ENCODE measurements at regions of chr1 and their contacts with region 1.

Region 1: GRCh38 chr1:24415334-24415909 is at the start of gene NIPAL3:
- DNase-seq: peak; percentile 99
- ATAC-seq: peak; percentile 94
- H3K4me3 Mint-ChIP-seq: peak within 1 kb of the TSS; percentile 98
- H3K27ac Mint-ChIP-seq: peak within 1 kb of the TSS; percentile 97
- H3K4me1 Mint-ChIP-seq: peaks cover 57% of the 10 kb centered on the region
- H3K27me3 Mint-ChIP-seq: no peaks in the 10 kb centered on the region
- total RNA-seq, gene NIPAL3: 38.1 to 41.4 TPM

Region 2: GRCh38 chr1:24201941-24202440 is 213.4 kb before region 1 on chr1:
- CTCF ChIA-PET with region 1: interaction called, 32 read pairs
- POLR2A ChIA-PET with region 1: no interaction called
- intact Hi-C with region 1: no loop called
- DNase-seq: peak; percentile 78
- ATAC-seq: no peak
- H3K4me3 Mint-ChIP-seq: no peak overlapping the region
- H3K27ac Mint-ChIP-seq: no peak overlapping the region
- H3K4me1 Mint-ChIP-seq: peaks cover 27% of the 10 kb centered on the region
- H3K27me3 Mint-ChIP-seq: peaks cover 2% of the 10 kb centered on the region

Region 3: DNA sequence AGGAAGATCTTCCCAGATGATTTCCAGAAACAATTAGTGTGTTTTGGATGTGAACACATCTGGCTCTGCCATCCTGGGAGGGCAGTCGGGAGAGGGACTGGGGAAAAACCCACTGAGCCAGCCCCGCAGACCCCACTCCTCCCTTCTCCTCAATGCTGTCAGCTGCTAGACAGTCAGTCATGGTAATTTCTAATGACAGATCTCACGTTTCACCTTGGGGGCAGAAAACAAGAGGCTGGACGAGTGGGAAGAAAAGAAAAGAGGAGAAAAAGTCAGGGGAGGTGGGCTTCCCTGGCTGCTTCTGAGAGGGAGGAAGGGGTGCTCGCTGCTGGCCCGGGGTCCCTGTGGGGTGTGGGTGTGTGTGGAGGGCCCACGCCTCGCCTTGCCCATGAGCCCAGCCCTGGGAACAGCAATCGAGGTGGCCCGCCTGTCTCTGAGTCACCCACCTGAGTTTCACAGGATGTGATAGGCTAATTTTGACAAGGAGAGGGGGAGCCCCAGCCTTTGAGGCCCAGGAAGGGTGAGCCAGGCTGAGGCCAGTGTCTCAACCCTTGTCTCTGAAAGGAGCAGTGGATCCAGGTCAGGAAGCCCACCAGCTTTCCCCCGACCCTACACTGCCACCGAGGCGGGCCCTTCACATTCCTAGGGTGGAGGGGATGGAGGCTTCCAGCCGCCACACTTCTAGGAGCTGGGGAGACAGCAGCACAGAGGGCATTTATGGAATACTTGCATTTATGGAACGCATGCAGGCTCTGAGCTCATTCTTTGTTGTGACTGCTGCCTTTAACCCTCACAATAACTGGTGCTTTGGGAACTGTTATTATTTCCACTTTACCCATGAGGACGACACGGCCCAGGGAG is 179.3 kb before region 1 on chr1:
- CTCF ChIA-PET with region 1: no interaction called
- POLR2A ChIA-PET with region 1: no interaction called
- intact Hi-C with region 1: no loop called
- DNase-seq: peak; percentile 82
- ATAC-seq: peak; percentile 100
- H3K4me3 Mint-ChIP-seq: no peak overlapping the region
- H3K27ac Mint-ChIP-seq: peak overlapping the region; percentile 27
- H3K4me1 Mint-ChIP-seq: peaks cover 15% of the 10 kb centered on the region
- H3K27me3 Mint-ChIP-seq: peaks cover 11% of the 10 kb centered on the region

Region 4: GRCh38 chr1:24481101-24481500 is 65.7 kb after region 1 on chr1:
- CTCF ChIA-PET with region 1: interaction called, 11 read pairs
- POLR2A ChIA-PET with region 1: interaction called, 5 read pairs
- intact Hi-C with region 1: loop called in 1 of 2 experiments (anchors 2 kb)
- DNase-seq: peak; percentile 81
- ATAC-seq: peak; percentile 76
- H3K4me3 Mint-ChIP-seq: peak overlapping the region; percentile 60
- H3K27ac Mint-ChIP-seq: peak overlapping the region; percentile 97
- H3K4me1 Mint-ChIP-seq: peaks cover 65% of the 10 kb centered on the region
- H3K27me3 Mint-ChIP-seq: no peaks in the 10 kb centered on the region

Region 5: GRCh38 chr1:24526940-24527542 is 111.6 kb after region 1 on chr1:
- CTCF ChIA-PET with region 1: interaction called, 62 read pairs
- POLR2A ChIA-PET with region 1: no interaction called
- intact Hi-C with region 1: loop called in 1 of 2 experiments (anchors 1 kb)
- DNase-seq: peak; percentile 68
- ATAC-seq: peak; percentile 76
- H3K4me3 Mint-ChIP-seq: no peak overlapping the region
- H3K27ac Mint-ChIP-seq: no peak overlapping the region
- H3K4me1 Mint-ChIP-seq: peaks cover 71% of the 10 kb centered on the region
- H3K27me3 Mint-ChIP-seq: no peaks in the 10 kb centered on the region

Region 6: DNA sequence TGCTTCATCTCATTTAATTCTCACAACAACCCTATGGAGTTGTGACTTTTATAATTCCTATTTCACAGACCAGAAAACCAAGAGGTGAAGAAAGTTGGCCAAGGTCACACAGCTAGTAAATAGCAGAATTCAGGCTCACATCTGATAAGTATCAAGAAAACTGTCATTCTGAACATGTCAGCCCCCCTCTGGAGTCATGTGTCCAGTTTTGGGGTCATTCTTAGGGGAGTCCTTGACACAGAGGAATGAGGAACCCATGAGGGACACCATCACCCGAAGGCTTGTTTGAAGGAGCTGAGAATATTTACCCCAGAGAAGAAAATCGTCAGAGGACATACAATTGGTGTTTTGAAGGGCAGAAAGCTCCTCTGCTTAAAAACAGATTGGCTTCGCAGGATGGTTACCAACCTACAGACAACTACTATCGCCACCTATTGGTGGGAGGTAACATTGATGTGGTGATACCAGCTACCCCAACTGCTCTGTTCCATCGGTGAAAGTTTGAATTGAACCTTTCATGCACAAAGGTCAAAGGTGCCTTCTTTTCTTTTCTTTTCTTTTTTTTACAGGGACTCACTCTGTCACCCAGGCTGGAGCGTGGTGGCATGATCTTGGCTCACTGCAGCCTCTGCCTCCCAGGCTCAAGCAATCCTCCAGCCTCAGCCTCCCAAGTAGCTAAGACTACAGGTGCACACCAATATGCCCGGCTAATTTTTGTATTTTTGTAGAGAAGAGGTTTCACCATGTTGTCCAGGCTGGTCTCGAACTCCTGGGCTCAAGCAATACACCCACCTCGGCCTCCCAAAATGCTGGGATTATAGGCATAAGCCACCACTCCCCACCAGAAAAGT is 171.8 kb after region 1 on chr1:
- CTCF ChIA-PET with region 1: interaction called, 63 read pairs
- POLR2A ChIA-PET with region 1: no interaction called
- intact Hi-C with region 1: loop called (anchors 1 kb)
- DNase-seq: peak; percentile 75
- ATAC-seq: peak; percentile 100
- H3K4me3 Mint-ChIP-seq: no peak overlapping the region
- H3K27ac Mint-ChIP-seq: peak overlapping the region; percentile 55
- H3K4me1 Mint-ChIP-seq: peaks cover 6% of the 10 kb centered on the region
- H3K27me3 Mint-ChIP-seq: peaks cover 3% of the 10 kb centered on the region